ENCODE measurements at regions of chr10 and their contacts with region 1.

Region 1: GRCh38 chr10:89351780-89352597 is 24.2 kb downstream of the IFIT3 start:
- DNase-seq: peak; percentile 85
- H3K4me3 ChIP-seq: peak overlapping the region; percentile 35
- H3K27ac ChIP-seq: peak overlapping the region; percentile 85
- H3K27me3 ChIP-seq: no peaks in the 10 kb centered on the region
- CTCF ChIP-seq: no peak

Region 2: GRCh38 chr10:88032566-88032965 is 1319.4 kb before region 1 on chr10:
- CTCF ChIA-PET with region 1: no interaction called
- POLR2A ChIA-PET with region 1: no interaction called
- DNase-seq: no peak
- H3K4me3 ChIP-seq: no peak overlapping the region
- H3K27ac ChIP-seq: no peak overlapping the region
- H3K27me3 ChIP-seq: no peaks in the 10 kb centered on the region
- CTCF ChIP-seq: no peak

Region 3: DNA sequence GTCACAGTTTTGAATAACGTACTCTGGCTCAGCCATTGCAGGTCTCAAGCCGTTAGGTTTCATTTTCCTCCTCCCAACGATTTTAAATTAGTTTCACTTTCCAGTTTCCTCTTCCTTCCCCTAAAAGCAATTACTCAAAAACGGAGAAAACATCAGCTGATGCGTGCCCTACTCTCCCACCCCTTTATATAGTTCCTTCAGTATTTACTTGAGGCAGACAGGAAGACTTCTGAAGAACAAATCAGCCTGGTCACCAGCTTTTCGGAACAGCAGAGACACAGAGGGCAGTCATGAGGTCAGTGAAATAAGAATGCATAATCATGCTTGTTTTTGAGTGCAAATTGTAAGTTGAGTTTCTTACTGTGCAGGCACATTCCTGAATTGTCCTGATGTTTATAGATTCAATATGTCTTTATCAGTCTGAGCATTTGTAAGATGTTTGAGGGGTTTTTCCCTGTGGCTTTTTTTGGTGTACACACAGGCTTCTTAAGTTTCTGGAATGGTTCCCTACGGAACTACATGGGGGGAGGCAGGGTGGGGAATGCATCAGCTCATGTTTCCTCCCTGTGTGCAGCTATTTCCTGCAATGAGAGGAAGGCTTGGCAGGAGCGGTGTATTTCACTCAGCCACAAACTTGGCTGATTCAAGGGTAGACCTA is 24.1 kb before region 1 on chr10 and contains the start of gene IFIT3:
- CTCF ChIA-PET with region 1: no interaction called
- POLR2A ChIA-PET with region 1: interaction called, 10 read pairs
- DNase-seq: peak; percentile 91
- H3K4me3 ChIP-seq: peak within 1 kb of the TSS; percentile 67
- H3K27ac ChIP-seq: peak within 1 kb of the TSS; percentile 97
- H3K27me3 ChIP-seq: no peaks in the 10 kb centered on the region
- CTCF ChIP-seq: no peak
- polyA plus RNA-seq, gene IFIT3: 6.3 and 8.7 TPM in 2 replicates